B cell (primary cell): ENCODE measurements at regions of chr14 and their contacts with region 1.

Region 1: GRCh38 chr14:58239244-58240195 is 5.1 kb upstream of the PSMA3 start:
- DNase-seq: peak; percentile 90
- ATAC-seq: peak; percentile 19
- H3K4me3 ChIP-seq: peak overlapping the region; percentile 56 to 99 (median 92)
- H3K4me3 Mint-ChIP-seq: no peak overlapping the region
- H3K27ac ChIP-seq: peak overlapping the region; percentile 51 to 88
- H3K27ac Mint-ChIP-seq: no peak overlapping the region
- H3K4me1 ChIP-seq: peaks cover 3 to 15% of the 10 kb centered on the region in 2 donors
- H3K4me1 Mint-ChIP-seq: peaks cover 22% of the 10 kb centered on the region
- H3K27me3 ChIP-seq: no peaks in the 10 kb centered on the region
- H3K27me3 Mint-ChIP-seq: no peaks in the 10 kb centered on the region
- CTCF ChIP-seq: no peak

Region 2: GRCh38 chr14:58160561-58160960 is 79.0 kb before region 1 on chr14:
- CTCF ChIA-PET with region 1: no interaction called
- POLR2A ChIA-PET with region 1: no interaction called
- intact Hi-C with region 1: no loop called
- DNase-seq: no peak
- ATAC-seq: no peak
- H3K4me3 ChIP-seq: no peak overlapping the region
- H3K4me3 Mint-ChIP-seq: no peak overlapping the region
- H3K27ac ChIP-seq: no peak overlapping the region
- H3K27ac Mint-ChIP-seq: no peak overlapping the region
- H3K4me1 ChIP-seq: no peaks in the 10 kb centered on the region
- H3K4me1 Mint-ChIP-seq: no peaks in the 10 kb centered on the region
- H3K27me3 ChIP-seq: no peaks in the 10 kb centered on the region
- H3K27me3 Mint-ChIP-seq: peaks cover 22% of the 10 kb centered on the region
- CTCF ChIP-seq: no peak

Region 3: DNA sequence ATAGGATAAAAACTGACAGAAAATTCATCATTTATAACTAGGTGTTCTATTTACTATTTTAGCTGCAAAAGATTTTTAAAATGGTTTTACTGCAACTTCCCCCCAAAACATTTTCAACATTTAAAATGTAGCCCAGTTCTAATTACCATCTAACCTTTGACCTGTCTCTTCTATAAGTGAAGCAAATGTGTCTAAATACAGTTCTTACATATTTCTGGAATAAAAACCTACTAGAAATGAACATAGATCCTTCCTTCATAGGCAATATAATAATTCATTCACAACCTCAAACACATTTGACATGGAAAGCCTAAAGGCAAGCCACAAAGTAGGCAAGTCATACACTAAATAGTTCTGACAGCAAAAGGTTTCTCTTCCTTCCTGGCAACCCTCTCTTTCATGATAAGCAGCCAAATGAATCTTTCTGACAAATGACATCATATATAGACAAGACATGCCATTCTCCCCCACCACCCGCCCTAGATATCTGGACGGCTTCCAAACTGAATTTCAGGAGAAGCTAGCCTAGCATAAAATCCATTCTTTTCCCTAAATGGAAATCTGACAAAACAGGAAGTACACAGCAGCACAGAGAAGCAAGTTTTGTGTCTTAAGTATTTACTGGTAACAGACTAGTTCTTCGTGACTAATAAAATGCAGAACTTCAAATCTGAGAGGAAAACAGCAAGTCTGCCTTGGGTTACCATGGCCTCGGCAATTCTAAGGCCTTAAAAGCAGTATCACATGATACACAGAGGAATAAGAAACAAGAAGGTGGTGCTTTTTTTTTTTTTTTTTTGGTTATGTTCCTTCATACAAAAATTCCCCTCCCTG is 41.7 kb after region 1 on chr14:
- CTCF ChIA-PET with region 1: no interaction called
- POLR2A ChIA-PET with region 1: interaction called, 11 read pairs
- intact Hi-C with region 1: no loop called
- DNase-seq: peak; percentile 76
- ATAC-seq: peak; percentile 84
- H3K4me3 ChIP-seq: peak overlapping the region in 2 of 5 experiments; percentile 2 to 9
- H3K4me3 Mint-ChIP-seq: peak overlapping the region; percentile 61
- H3K27ac ChIP-seq: peak overlapping the region; percentile 64 to 91
- H3K27ac Mint-ChIP-seq: peak overlapping the region; percentile 88
- H3K4me1 ChIP-seq: peaks cover 17 to 18% of the 10 kb centered on the region in 2 donors
- H3K4me1 Mint-ChIP-seq: peaks cover 43% of the 10 kb centered on the region
- H3K27me3 ChIP-seq: no peaks in the 10 kb centered on the region
- H3K27me3 Mint-ChIP-seq: no peaks in the 10 kb centered on the region
- CTCF ChIP-seq: no peak

Region 4: DNA sequence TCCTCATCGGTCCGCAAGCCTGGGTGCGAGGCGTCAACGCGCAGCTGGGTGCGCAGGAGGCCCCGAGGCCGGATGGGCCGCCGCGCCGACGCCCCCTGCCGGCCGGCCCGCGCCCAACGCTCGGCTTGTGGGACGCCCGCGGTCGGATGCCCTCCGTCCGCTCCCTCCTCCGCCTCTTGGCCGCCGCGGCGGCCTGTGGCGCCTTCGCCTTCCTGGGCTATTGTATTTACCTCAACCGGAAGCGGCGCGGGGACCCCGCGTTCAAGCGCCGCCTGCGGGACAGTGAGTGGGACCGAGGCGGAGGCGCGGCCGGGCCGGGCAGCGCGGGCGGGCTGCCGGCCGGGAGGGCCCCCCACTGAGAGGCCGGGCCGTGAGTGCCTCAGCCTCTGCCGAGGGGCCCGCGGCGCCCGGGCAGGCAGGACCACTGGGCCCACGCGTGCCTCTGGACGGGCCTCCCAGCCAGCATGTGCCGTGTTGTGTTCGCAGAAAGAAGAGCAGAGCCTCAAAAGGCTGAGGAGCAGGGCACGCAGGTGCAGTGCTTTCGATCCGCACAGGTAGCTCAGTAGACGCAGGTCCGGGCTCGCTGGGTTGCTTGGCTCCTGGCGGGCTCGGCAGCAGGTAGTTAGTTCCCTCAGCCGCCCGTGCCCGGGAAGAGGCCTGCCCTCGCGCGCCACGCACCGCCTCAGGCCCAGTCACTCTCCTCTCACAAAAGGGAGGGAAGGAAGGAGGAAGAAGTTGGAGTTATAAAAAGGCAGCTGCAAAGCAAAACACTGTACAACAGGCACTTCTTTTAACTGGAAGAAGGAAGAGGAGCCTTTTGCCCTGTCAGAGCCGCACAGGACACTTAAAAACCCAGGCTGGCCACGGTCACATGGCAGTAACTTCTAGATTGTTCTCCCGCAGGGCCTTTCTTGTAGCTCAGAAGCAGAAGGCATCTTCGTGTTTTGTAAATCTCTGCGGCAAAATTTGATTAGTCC is 156.6 kb after region 1 on chr14 and contains the start of gene TOMM20L:
- CTCF ChIA-PET with region 1: no interaction called
- POLR2A ChIA-PET with region 1: no interaction called
- intact Hi-C with region 1: loop called (anchors 1 kb)
- DNase-seq: peak; percentile 89
- ATAC-seq: peak; percentile 90
- H3K4me3 ChIP-seq: peak within 1 kb of the TSS; percentile 36 to 77 (median 66)
- H3K4me3 Mint-ChIP-seq: peak within 1 kb of the TSS; percentile 87
- H3K27ac ChIP-seq: peak within 1 kb of the TSS; percentile 55 to 76
- H3K27ac Mint-ChIP-seq: peak within 1 kb of the TSS; percentile 87
- H3K4me1 ChIP-seq: peaks cover 9 to 14% of the 10 kb centered on the region in 2 donors
- H3K4me1 Mint-ChIP-seq: peaks cover 13% of the 10 kb centered on the region
- H3K27me3 ChIP-seq: no peaks in the 10 kb centered on the region
- H3K27me3 Mint-ChIP-seq: no peaks in the 10 kb centered on the region
- CTCF ChIP-seq: peak; percentile 93
- total RNA-seq, gene TOMM20L: 0.70 and 1.3 TPM in 2 replicates